Mammary epithelial cell (primary cell): ENCODE measurements at regions of chrX and their contacts with region 1.

Region 1: DNA sequence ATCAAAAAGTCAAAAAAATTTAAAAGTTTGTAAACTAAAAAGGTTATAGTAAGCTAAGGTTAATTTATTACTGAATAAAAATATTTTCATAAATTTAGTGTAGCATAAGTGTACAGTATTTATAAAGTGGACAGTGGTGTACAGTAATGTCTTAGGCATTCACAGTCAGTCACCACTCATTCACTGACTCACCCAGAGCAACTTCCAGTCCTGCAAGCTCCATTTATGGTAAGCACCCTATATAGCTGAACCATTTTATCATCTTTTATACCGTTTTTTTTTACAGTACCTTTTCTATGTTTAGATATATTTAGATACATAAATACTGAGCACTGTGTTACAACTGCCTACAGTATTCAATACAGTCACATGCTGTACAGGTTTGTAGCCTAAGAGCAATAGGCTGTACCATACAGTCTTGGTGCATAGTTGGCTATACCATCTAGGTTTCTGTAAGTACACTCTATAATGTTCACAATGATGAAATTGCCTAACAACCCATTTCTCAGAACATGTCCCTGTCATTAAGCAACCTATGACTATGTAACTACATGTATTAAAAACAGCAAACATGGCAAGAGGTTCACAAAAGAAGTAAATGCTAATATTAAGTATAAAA is 18.6 kb downstream of the ACSL4 start:
- DNase-seq: peak; percentile 75
- H3K4me3 ChIP-seq: no peak overlapping the region
- H3K27ac ChIP-seq: peak overlapping the region; percentile 46
- H3K4me1 ChIP-seq: peaks cover 21% of the 10 kb centered on the region
- H3K27me3 ChIP-seq: no peaks in the 10 kb centered on the region
- CTCF ChIP-seq: no peak

Region 2: DNA sequence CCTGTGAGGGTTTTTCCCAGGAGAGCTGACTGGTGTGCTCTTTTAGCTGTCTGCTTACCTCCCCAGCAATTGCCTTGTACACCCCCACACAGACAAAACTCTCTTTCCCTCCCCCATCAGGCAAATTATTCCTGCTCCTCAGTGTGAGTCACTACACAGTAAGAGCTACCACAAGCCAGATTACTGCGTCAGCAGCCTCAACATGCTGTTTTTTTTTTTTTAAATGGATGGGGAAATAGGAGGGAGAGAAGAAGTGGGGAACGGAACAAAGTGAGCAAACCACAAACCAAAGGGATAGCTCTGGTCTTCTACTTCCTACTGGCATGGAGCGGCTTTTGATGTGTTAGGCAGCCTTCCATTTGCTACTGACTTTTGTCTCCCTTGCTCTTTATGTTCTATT is 126.1 kb after region 1 on chrX:
- CTCF ChIA-PET with region 1: no interaction called
- dilution Hi-C with region 1: no loop called
- in situ Hi-C with region 1: no loop called
- intact Hi-C with region 1: loop called (anchors 5 kb)
- DNase-seq: peak; percentile 92
- H3K4me3 ChIP-seq: no peak overlapping the region
- H3K27ac ChIP-seq: peak overlapping the region; percentile 71
- H3K4me1 ChIP-seq: peaks cover 26% of the 10 kb centered on the region
- H3K27me3 ChIP-seq: peaks cover 2% of the 10 kb centered on the region
- CTCF ChIP-seq: no peak

Region 3: DNA sequence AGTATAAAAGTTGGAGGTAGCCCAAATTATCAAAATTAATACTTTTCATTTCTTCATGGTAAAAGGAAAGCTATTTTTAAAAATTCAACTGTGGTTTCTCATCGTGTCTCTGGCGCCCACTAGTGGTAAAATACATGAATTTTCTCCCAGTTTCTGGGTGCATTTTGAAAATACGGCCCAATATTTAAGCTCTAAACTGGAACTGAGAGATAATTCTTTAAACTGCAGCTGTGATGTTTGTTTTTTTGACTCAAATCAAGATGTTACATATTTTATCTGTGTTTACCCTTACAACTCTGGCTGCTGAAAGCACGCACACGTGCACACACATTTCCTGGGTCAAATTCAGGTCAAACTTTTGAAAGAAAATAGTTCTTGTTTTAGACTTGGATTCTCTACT is 142.5 kb after region 1 on chrX:
- CTCF ChIA-PET with region 1: interaction called, 22 read pairs
- dilution Hi-C with region 1: no loop called
- in situ Hi-C with region 1: loop called (anchors 5 to 10 kb)
- intact Hi-C with region 1: loop called (anchors 1 kb)
- DNase-seq: no peak
- H3K4me3 ChIP-seq: no peak overlapping the region
- H3K27ac ChIP-seq: no peak overlapping the region
- H3K4me1 ChIP-seq: peaks cover 8% of the 10 kb centered on the region
- H3K27me3 ChIP-seq: no peaks in the 10 kb centered on the region
- CTCF ChIP-seq: peak; percentile 78 to 92

Region 4: GRCh38 chrX:109862433-109862832 is 148.0 kb after region 1 on chrX:
- CTCF ChIA-PET with region 1: interaction called, 22 read pairs
- dilution Hi-C with region 1: no loop called
- in situ Hi-C with region 1: loop called (anchors 5 to 10 kb)
- intact Hi-C with region 1: loop called (anchors 1 kb)
- DNase-seq: peak; percentile 25
- H3K4me3 ChIP-seq: no peak overlapping the region
- H3K27ac ChIP-seq: no peak overlapping the region
- H3K4me1 ChIP-seq: no peaks in the 10 kb centered on the region
- H3K27me3 ChIP-seq: peaks cover 3% of the 10 kb centered on the region
- CTCF ChIP-seq: no peak

Region 5: DNA sequence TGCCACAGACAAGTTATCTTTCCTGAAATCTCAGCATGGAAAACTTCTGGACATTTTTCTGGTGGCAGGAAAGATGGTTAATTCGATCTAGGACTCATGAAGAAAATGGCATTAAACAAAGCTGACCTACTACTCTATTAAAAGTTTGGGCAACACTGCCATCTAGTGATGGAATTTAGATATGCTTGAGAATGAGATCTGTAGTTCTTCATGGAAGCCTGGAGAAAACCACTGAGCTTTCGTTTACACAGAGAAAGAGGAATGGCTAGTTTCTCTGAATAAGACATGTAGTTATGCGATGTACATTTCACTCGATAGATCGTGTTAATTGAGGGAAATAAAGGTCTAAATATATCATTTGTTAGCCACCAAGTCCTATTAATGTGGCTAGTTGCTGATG is 1132.9 kb after region 1 on chrX:
- CTCF ChIA-PET with region 1: no interaction called
- dilution Hi-C with region 1: no loop called
- in situ Hi-C with region 1: no loop called
- intact Hi-C with region 1: loop called (anchors 5 kb)
- DNase-seq: peak; percentile 44
- H3K4me3 ChIP-seq: no peak overlapping the region
- H3K27ac ChIP-seq: no peak overlapping the region
- H3K4me1 ChIP-seq: no peaks in the 10 kb centered on the region
- H3K27me3 ChIP-seq: no peaks in the 10 kb centered on the region
- CTCF ChIP-seq: peak; percentile 58 to 60